CD4-positive, alpha-beta T cell (primary cell): ENCODE measurements at regions of chr20 and their contacts with region 1.

Region 1: GRCh38 chr20:45812157-45813020 is at the start of gene UBE2C:
- DNase-seq: peak; percentile 85 to 98 (median 90)
- ATAC-seq: peak; percentile 100
- H3K4me3 ChIP-seq: peak within 1 kb of the TSS; percentile 72
- H3K4me3 Mint-ChIP-seq: peak within 1 kb of the TSS; percentile 82
- H3K27ac ChIP-seq: no peak within 1 kb of the TSS
- H3K27ac Mint-ChIP-seq: peak within 1 kb of the TSS; percentile 58
- H3K4me1 ChIP-seq: peaks cover 16% of the 10 kb centered on the region
- H3K4me1 Mint-ChIP-seq: peaks cover 15% of the 10 kb centered on the region
- H3K27me3 ChIP-seq: no peaks in the 10 kb centered on the region
- H3K27me3 Mint-ChIP-seq: no peaks in the 10 kb centered on the region
- CTCF ChIP-seq: no peak
- total RNA-seq, gene UBE2C: 0.52 to 0.64 TPM

Region 2: DNA sequence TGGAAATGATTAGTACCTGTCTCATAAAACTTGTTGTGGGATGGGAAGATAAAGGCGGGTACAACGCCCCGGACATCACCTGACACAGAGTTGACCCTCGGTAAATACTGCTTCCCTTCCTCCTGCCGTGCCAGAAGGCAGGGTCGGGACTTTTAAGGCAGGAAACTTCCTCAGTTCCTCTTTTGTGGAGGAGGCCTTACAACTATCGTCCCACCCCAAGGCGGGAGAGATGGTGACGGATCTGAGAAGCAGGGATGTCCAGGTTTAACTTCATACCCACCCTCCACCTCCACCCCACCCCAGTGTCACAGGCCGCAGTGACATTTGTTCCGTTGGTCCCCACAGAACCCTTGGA is 20.1 kb before region 1 on chr20:
- CTCF ChIA-PET with region 1: no interaction called
- POLR2A ChIA-PET with region 1: interaction called, 3 read pairs
- intact Hi-C with region 1: loop called in 1 of 2 experiments (anchors 2 kb)
- DNase-seq: peak in 4 of 14 experiments; percentile 1 to 56 (median 4)
- ATAC-seq: peak; percentile 3
- H3K4me3 ChIP-seq: peak overlapping the region; percentile 90
- H3K4me3 Mint-ChIP-seq: peak overlapping the region; percentile 98
- H3K27ac ChIP-seq: peak overlapping the region; percentile 80 to 81
- H3K27ac Mint-ChIP-seq: peak overlapping the region; percentile 91
- H3K4me1 ChIP-seq: peaks cover 20% of the 10 kb centered on the region
- H3K4me1 Mint-ChIP-seq: peaks cover 25% of the 10 kb centered on the region
- H3K27me3 ChIP-seq: no peaks in the 10 kb centered on the region
- H3K27me3 Mint-ChIP-seq: no peaks in the 10 kb centered on the region
- CTCF ChIP-seq: no peak

Region 3: DNA sequence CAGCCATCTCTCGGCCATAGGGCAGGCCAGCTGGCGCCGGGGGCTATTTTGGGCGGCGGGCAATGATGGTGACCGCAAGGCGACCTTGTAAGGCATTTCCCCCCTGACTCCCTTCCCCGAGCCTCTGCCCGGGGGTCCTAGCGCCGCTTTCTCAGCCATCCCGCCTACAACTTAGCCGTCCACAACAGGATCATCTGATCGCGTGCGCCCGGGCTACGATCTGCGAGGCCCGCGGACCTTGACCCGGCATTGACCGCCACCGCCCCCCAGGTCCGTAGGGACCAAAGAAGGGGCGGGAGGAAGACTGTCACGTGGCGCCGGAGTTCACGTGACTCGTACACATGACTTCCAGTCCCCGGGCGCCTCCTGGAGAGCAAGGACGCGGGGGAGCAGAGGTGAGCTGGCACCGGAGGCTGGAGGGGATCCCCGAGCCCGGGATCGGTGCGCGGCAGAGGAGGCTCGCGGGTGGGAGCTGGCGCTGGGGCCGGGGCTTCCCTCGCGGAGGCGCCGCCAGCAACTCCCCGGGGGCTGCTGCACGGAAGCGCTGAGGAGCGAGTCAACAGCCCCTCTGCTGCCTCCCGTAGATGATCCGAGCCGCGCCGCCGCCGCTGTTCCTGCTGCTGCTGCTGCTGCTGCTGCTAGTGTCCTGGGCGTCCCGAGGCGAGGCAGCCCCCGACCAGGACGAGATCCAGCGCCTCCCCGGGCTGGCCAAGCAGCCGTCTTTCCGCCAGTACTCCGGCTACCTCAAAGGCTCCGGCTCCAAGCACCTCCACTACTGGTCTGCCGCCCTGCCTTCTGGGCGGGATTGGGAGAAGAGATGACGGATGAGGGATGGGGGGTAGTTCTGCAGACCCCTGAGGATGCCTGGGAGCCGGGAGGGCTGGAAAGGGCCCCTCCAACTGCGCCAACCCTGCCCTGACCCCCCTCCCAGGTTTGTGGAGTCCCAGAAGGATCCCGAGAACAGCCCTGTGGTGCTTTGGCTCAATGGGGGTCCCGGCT is 78.9 kb after region 1 on chr20 and contains the starts of genes CTSA and NEURL2:
- CTCF ChIA-PET with region 1: no interaction called
- POLR2A ChIA-PET with region 1: interaction called, 5 read pairs
- intact Hi-C with region 1: loop called in 1 of 2 experiments (anchors 5 kb)
- DNase-seq: peak; percentile 64 to 92 (median 76)
- ATAC-seq: peak; percentile 79
- H3K4me3 ChIP-seq: peak within 1 kb of the TSS; percentile 93
- H3K4me3 Mint-ChIP-seq: peak within 1 kb of the TSS; percentile 96
- H3K27ac ChIP-seq: peak within 1 kb of the TSS; percentile 50 to 65
- H3K27ac Mint-ChIP-seq: peak within 1 kb of the TSS; percentile 84
- H3K4me1 ChIP-seq: peaks cover 48% of the 10 kb centered on the region
- H3K4me1 Mint-ChIP-seq: peaks cover 51% of the 10 kb centered on the region
- H3K27me3 ChIP-seq: no peaks in the 10 kb centered on the region
- H3K27me3 Mint-ChIP-seq: no peaks in the 10 kb centered on the region
- CTCF ChIP-seq: no peak
- total RNA-seq, gene CTSA: 40.3 to 42.6 TPM
- total RNA-seq, gene NEURL2: 1.5 to 2.5 TPM